ENCODE measurements at regions of chr19 and their contacts with region 1.

Region 1: GRCh38 chr19:49889687-49890348 is 6.9 kb downstream of the IL4I1 start:
- DNase-seq: no peak
- ATAC-seq: peak; percentile 66
- H3K4me3 Mint-ChIP-seq: peak overlapping the region; percentile 82
- H3K27ac Mint-ChIP-seq: peak overlapping the region; percentile 7
- H3K4me1 Mint-ChIP-seq: peaks cover 41% of the 10 kb centered on the region
- H3K27me3 Mint-ChIP-seq: no peaks in the 10 kb centered on the region
- CTCF ChIP-seq: peak; percentile 39

Region 2: DNA sequence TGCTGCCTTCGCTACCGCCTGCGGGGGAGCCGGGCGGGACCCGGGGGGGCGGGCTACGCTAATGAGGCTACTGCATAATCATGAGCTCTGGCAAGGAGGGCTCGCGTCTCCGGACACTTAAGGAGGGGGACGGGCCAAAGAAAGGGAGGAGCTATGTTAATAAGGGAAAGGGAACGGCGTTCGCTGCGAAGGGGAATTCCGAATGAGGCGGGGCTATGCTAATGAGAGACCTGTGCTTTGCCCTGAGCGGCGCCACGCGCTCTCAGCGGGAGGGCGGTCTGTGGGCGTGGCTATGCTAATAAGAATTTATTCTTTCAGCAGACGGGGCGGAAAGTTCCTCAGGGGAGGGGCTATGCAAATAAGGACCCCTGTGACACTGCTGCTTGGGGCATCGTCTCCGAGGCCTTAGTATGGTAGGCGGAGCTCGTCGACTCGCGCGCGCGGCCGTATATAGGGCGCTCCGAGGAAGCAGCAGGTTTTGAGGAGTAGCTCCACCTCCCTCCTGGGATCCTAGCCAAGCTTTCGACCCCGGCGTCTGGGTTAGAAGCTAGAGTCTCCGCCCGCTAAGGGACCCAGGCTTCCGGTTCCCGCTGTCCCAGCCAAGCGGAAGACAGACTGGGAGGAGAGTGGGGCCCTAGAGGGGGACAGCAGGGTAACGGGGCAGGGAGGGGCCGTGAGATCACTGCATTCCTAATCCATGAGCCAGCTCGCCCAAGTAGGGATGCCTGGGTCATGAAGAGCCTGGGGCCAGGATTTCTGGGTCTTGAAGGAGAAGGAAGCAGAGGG is 249.5 kb before region 1 on chr19 and contains the start of gene RRAS:
- CTCF ChIA-PET with region 1: no interaction called
- POLR2A ChIA-PET with region 1: no interaction called
- intact Hi-C with region 1: no loop called
- DNase-seq: peak; percentile 97
- ATAC-seq: peak; percentile 69
- H3K4me3 Mint-ChIP-seq: peak within 1 kb of the TSS; percentile 93
- H3K27ac Mint-ChIP-seq: peak within 1 kb of the TSS; percentile 96
- H3K4me1 Mint-ChIP-seq: peaks cover 59% of the 10 kb centered on the region
- H3K27me3 Mint-ChIP-seq: no peaks in the 10 kb centered on the region
- CTCF ChIP-seq: no peak
- total RNA-seq, gene RRAS: 4.8 and 5.1 TPM in 2 replicates

Region 3: GRCh38 chr19:49916842-49917733 is 27.3 kb after region 1 on chr19:
- CTCF ChIA-PET with region 1: interaction called, 3 read pairs
- POLR2A ChIA-PET with region 1: interaction called, 317 read pairs
- intact Hi-C with region 1: loop called (anchors 1 kb)
- DNase-seq: peak; percentile 41
- ATAC-seq: peak; percentile 74
- H3K4me3 Mint-ChIP-seq: peak overlapping the region; percentile 77
- H3K27ac Mint-ChIP-seq: peak overlapping the region; percentile 94
- H3K4me1 Mint-ChIP-seq: peaks cover 77% of the 10 kb centered on the region
- H3K27me3 Mint-ChIP-seq: no peaks in the 10 kb centered on the region
- CTCF ChIP-seq: no peak